ENCODE measurements at regions of chr7 and their contacts with region 1.

Region 1: DNA sequence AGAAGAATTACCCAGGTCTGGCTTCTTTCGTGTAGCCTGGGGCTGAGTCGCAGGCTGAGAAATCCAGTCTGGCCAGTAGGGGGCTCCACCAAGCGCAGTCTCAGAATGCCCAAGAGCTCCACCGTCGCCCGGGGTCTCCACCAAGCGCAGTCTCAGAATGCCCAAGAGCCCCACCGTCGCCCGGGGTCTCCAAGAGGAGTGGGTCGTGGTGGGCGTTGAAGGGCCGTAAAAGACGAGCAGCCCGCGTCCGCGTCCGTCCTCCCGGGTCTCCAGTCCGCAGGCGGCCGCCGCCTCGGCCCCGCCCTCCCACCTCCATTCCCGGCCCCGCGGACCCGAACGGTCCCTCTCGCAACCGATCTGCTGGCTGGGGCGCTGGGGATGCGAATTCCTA is 895 bp upstream of the ZYX start:
- DNase-seq: peak; percentile 81 to 94 (median 88)
- ATAC-seq: peak; percentile 80
- H3K4me3 ChIP-seq: peak overlapping the region; percentile 72
- H3K27ac ChIP-seq: peak overlapping the region; percentile 94
- H3K4me1 ChIP-seq: peaks cover 21 to 31% of the 10 kb centered on the region in 2 experiments; a peak in 4 of 5 replicates
- H3K27me3 ChIP-seq: peaks cover 0 to 7% of the 10 kb centered on the region in 2 experiments; a peak in 1 of 5 replicates
- CTCF ChIP-seq: peak; percentile 94 to 98 (median 95)
- EP300 ChIP-seq: no peak; the same call in 1 of the 2 replicates
- POLR2A ChIP-seq: peak; percentile 44; the same call in 1 of the 2 replicates
- RAD21 ChIP-seq: peak; percentile 47 to 49

Region 2: DNA sequence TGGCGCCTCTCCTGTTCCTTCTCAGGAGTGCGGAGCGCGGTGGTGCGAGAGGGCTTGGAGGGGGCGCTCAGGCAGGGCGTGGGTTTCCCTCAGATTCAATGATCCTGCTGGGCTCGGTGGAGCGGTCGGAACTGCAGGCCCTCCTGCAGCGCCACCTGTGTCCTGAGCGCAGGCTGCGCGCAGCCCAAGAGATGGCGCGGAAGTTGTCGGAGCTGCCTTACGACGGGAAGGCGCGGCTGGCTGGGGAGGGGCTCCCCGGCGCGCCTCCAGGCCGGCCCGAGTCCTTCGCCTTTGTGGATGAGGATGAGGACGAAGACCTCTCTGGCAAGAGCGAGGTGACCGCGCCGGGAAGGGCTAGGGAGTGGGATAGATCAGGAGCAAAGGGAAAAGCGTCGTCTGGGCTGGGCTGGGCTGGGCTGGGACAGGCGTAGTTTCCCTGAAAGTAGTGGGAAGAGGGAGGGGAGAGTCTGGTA is 34.8 kb before region 1 on chr7:
- CTCF ChIA-PET with region 1: no interaction called
- POLR2A ChIA-PET with region 1: interaction called, 3 read pairs
- in situ Hi-C with region 1: no loop called
- intact Hi-C with region 1: loop called (anchors 5 kb)
- DNase-seq: peak; percentile 63 to 90 (median 76)
- ATAC-seq: peak; percentile 100
- H3K4me3 ChIP-seq: peak overlapping the region; percentile 1; the same call in 1 of the 2 replicates
- H3K27ac ChIP-seq: no peak overlapping the region
- H3K4me1 ChIP-seq: peaks cover 0 to 7% of the 10 kb centered on the region in 2 experiments; a peak in 2 of 5 replicates
- H3K27me3 ChIP-seq: peaks cover 33 to 53% of the 10 kb centered on the region in 2 experiments
- CTCF ChIP-seq: peak; percentile 81 to 96 (median 85)
- EP300 ChIP-seq: no peak
- POLR2A ChIP-seq: no peak
- RAD21 ChIP-seq: peak in 1 of 2 experiments; percentile 53; a peak in 2 of 4 replicates

Region 3: DNA sequence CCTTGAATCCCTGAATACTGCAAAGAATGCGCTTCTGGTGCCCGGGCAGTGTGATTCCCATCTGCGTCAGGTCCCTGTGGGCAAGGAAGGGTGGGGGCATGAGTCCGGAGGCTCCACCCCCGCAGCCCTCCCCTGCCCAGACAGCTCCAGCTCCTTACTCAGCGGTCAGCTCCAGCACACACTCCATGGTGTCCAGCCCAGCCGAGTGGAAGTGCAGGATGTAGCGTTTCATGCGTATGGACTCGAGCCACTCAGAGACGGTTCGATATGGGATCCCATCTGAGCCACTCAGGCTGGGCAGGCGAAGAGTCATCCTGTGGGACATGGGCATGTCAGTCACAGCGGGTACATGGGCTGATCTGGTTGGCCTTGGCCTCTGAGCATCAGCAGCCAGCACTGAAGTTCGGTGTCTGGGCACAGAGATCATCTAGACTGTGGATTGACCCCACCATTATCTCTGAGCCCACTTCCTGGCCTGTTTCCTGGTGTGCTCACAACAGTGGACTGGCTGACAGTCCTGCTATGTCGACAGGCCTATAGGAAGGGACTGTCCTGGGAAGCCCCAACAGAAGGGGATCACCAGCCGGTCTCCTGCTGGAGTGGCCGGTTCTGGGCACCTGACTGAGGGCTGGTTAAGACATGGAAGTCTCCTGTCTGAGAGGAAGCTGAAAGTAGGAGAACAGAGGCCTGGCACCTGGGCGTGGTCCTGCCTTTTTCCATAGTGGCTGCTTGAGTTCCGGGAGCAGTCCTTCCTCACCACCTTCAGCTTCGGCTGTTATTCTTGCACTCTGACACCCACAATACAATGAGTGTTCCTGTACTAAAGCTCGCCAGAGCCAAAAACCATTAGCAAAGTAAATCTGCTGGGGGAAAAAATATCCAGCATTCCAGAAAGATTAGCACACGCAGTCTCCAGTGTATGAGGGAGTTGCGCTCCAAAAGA is 11.5 kb after region 1 on chr7:
- CTCF ChIA-PET with region 1: no interaction called
- POLR2A ChIA-PET with region 1: interaction called, 46 read pairs
- in situ Hi-C with region 1: no loop called
- intact Hi-C with region 1: no loop called
- DNase-seq: peak in 1 of 4 experiments; percentile 20
- ATAC-seq: peak; percentile 2; the same call in 1 of the 3 replicates
- H3K4me3 ChIP-seq: no peak overlapping the region
- H3K27ac ChIP-seq: no peak overlapping the region
- H3K4me1 ChIP-seq: peaks cover 0 to 22% of the 10 kb centered on the region in 2 experiments; a peak in 2 of 5 replicates
- H3K27me3 ChIP-seq: peaks cover 8 to 34% of the 10 kb centered on the region in 2 experiments; a peak in 4 of 5 replicates
- CTCF ChIP-seq: no peak
- EP300 ChIP-seq: no peak
- POLR2A ChIP-seq: 0 out of 2 replicates have a peak, but pooled peaks have one; percentile 30
- RAD21 ChIP-seq: no peak

Region 4: DNA sequence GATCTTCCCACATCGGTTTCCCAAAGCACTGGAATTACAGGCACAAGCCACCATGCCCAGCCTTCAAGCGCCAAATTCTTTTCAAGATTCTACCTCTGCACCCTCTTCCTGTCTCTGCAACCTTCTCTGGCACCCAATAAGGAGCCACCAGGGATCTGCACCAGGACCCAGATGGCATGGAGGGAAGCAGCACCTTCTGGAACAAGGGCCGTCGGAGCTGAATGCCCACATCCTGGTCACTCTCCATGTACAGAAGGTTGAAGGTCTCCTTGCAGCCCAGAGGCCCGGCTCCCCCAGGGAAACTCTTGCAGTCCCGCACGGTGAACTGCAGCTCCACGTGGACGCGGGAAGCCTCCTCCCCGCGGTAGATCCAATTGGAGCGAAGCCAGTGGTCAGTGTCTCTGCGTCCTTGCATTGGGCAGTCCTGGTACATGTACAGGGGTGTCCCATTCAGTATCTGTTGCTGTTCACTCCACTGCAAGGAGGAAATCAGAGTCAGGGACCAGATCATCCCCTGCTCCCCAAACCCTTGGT is 20.9 kb after region 1 on chr7:
- CTCF ChIA-PET with region 1: no interaction called
- POLR2A ChIA-PET with region 1: interaction called, 11 read pairs
- in situ Hi-C with region 1: no loop called
- intact Hi-C with region 1: no loop called
- DNase-seq: no peak
- ATAC-seq: no peak
- H3K4me3 ChIP-seq: no peak overlapping the region
- H3K27ac ChIP-seq: no peak overlapping the region
- H3K4me1 ChIP-seq: peaks cover 0 to 12% of the 10 kb centered on the region in 2 experiments; a peak in 2 of 5 replicates
- H3K27me3 ChIP-seq: peaks cover 60 to 80% of the 10 kb centered on the region in 2 experiments
- CTCF ChIP-seq: no peak
- EP300 ChIP-seq: no peak
- POLR2A ChIP-seq: no peak
- RAD21 ChIP-seq: no peak